ENCODE measurements at regions of chr5 and their contacts with region 1.

Region 1: DNA sequence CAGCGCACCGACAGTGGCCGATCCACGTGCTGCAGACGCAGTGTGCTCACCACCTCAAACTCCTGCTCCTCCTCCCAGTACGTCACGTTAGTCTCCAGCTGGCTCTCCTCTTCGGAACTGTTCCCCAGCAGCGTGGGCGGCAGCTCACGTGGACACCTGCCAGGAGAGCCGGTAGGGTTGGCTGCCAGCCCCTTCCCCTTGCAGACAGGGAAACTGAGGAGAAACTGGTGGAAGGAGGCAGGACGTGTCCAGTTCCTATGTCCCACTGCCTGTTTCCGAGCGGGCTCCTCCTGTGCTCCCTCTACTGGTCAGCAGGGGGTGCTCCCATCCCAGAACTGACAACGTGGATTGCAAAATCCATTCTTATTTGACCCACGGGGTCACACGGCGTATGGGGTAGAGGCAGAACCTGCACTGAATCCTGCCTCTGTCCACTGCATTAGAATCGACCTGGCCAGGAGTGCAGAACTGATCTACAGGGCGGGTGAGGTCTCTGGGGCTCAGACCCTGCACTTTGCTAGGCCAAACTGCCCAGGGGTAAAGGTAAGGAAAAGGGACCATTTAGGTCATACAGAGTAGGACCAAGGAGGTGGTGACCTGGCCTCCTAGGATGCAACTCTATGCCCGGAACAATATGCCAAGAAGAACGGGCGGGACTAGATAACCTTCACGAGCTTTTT is 25.7 kb downstream of the PDGFRB start:
- DNase-seq: peak; percentile 84
- H3K4me3 ChIP-seq: no peak overlapping the region
- H3K27ac ChIP-seq: no peak overlapping the region
- H3K4me1 ChIP-seq: no peaks in the 10 kb centered on the region
- H3K27me3 ChIP-seq: no peaks in the 10 kb centered on the region
- CTCF ChIP-seq: peak; percentile 81

Region 2: DNA sequence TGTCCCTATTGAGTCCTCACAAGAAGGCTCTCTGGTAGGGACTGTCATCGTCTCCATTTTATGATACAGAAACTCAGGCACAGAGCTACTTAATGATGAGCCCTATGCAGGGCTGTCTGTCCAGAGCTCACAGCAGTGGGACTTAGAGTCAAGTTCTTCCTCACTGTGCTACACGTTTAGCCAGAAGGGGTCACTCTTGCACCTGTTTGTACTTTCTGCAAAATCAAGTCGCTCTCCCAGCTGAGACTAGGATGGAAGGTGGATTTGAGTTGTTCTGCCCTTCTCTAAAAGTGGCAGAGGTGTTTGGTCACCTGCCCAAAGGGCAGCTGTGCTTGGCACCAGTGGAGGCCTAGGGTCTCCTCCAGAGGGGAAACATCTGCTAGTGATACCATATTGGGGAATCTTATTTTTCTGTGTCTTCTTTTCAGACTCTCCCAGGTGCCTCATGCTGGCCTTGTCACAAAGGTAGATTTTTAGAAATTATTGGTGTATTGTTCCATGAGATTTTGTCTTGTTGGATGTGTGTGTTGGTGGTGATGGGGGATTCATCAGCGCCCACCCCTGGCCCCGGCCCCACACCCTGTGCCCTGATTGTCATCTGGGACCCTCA is 295.6 kb before region 1 on chr5:
- intact Hi-C with region 1: loop called (anchors 10 kb)
- DNase-seq: peak; percentile 77
- H3K4me3 ChIP-seq: no peak overlapping the region
- H3K27ac ChIP-seq: no peak overlapping the region
- H3K4me1 ChIP-seq: no peaks in the 10 kb centered on the region
- H3K27me3 ChIP-seq: no peaks in the 10 kb centered on the region
- CTCF ChIP-seq: peak; percentile 44

Region 3: DNA sequence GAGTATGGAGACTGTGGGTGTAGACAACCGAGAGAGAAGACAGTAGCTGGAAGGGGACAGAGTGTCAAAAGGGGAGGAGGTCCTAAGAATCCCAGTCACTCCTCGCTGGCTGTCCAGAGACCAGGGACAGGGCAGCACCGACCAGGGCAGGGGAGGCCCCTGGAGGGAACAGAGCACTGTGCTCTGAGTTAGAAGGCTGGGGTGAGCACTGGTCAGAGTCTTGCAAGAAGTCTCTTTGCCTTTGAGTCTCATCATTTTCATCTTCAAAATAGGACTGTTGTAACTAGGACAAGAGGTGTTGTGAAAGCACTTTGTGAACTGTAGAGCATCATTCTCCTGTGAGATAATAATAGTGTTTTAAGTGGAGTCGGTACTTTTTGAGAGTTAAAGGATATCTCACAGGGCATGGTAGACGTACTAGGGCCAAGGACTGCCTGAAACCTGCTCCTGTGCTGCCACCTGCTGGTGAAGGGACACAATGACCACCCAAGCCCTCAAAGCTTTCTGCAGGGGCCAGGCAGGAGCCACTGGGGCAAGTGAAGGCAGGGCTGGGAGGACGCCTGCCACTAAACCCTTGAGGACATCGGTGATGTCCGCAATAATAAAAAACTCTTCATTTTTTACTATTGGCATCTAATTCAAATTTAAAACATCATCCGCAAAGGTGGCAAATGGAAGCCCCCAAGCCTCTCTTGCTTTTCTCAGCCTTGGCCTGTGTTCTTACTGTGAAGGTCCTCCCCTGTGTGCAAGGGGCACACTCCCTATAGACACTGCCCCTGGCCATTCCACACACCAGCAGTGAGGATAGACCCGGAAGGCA is 88.1 kb after region 1 on chr5:
- intact Hi-C with region 1: loop called (anchors 2 kb)
- DNase-seq: peak; percentile 89
- H3K4me3 ChIP-seq: no peak overlapping the region
- H3K27ac ChIP-seq: peak overlapping the region; percentile 75
- H3K4me1 ChIP-seq: peaks cover 6% of the 10 kb centered on the region
- H3K27me3 ChIP-seq: no peaks in the 10 kb centered on the region
- CTCF ChIP-seq: peak; percentile 96

Region 4: GRCh38 chr5:150245111-150245789 is 115.3 kb after region 1 on chr5:
- intact Hi-C with region 1: no loop called
- DNase-seq: no peak
- H3K4me3 ChIP-seq: no peak overlapping the region
- H3K27ac ChIP-seq: no peak overlapping the region
- H3K4me1 ChIP-seq: no peaks in the 10 kb centered on the region
- H3K27me3 ChIP-seq: no peaks in the 10 kb centered on the region
- CTCF ChIP-seq: no peak

Region 5: GRCh38 chr5:150340614-150341255 is 210.8 kb after region 1 on chr5:
- intact Hi-C with region 1: loop called (anchors 5 kb)
- DNase-seq: no peak
- H3K4me3 ChIP-seq: no peak overlapping the region
- H3K27ac ChIP-seq: no peak overlapping the region
- H3K4me1 ChIP-seq: no peaks in the 10 kb centered on the region
- H3K27me3 ChIP-seq: no peaks in the 10 kb centered on the region
- CTCF ChIP-seq: no peak

Region 6: GRCh38 chr5:150436141-150436680 is 306.3 kb after region 1 on chr5:
- intact Hi-C with region 1: loop called (anchors 10 kb)
- DNase-seq: peak; percentile 92
- H3K4me3 ChIP-seq: no peak overlapping the region
- H3K27ac ChIP-seq: no peak overlapping the region
- H3K4me1 ChIP-seq: peaks cover 3% of the 10 kb centered on the region
- H3K27me3 ChIP-seq: no peaks in the 10 kb centered on the region
- CTCF ChIP-seq: peak; percentile 88